HepG2 (cell line): ENCODE measurements at regions of chr9 and their contacts with region 1.

Region 1: DNA sequence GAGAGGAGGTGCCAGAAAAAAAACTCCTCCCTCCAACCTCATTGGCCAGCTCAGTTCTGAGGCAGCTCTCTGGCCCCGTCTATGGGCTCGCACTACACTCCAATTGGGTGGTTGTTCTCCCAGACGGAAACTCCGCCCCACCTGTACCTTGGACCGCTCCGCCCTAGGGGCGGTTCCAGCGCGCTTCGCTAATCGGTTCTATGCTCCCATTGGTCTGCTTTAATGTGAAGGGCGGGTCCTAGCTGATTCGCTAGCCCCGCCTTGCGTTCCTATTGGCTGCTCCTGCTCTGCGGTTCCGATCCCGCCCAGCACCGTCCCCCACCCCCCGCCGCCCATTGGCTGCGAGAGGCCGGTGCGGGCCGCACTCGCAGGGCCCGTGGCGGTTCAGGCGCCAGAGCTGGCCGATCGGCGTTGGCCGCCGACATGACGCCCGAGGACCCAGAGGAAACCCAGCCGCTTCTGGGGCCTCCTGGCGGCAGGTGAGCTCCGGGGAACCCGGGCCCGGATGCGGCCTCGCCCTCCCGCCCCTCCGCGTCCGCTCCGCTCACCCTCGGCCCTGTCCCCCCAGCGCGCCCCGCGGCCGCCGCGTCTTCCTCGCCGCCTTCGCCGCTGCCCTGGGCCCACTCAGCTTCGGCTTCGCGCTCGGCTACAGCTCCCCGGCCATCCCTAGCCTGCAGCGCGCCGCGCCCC is at the start of gene SLC2A8:
- DNase-seq: peak; percentile 99
- ATAC-seq: peak; percentile 83
- H3K4me3 ChIP-seq: peak within 1 kb of the TSS; percentile 86 to 96 (median 88)
- H3K27ac ChIP-seq: peak within 1 kb of the TSS; percentile 89
- H3K4me1 ChIP-seq: peaks cover 72% of the 10 kb centered on the region
- H3K27me3 ChIP-seq: no peaks in the 10 kb centered on the region
- CTCF ChIP-seq: peak; percentile 48
- EP300 ChIP-seq: no peak
- POLR2A ChIP-seq: peak in 1 of 2 experiments; percentile 89; a peak in 2 of 4 replicates
- RAD21 ChIP-seq: peak; percentile 85
- total RNA-seq, gene SLC2A8: 24.0 and 48.6 TPM in 2 replicates

Region 2: DNA sequence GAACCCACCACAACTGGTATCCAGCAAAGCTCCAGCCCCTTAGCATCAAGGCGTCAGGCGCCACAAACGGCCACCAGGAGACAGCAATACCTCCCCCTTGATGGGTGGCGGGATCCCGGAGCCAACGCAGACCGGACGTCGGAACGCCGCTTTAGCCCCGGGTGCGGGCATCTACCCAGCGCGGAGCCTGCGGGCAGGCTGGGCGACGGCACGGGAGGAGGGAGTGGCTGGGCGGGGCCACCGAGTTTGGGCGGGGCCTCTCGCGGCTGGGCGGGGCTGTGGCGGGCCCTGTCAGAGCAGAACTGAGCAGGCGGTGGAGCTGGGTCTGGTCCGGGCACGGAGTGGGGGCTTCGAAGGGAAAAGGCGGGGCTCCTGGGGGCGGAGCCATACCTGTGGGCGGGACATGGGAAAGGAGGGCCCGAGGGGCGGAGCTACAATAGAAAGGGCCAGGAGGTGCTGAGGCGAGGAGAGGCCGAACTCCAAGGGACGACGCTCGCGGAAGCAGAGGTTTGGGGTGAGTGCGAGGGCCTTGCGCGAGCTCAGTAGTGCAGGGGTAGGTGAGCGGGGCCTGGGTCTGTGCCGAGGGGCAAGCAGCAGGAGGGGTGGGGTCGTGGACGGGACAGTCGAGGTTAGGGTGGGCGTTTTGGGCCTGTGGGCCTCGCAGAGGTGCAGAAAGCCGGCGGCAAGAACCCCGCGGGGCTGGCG is 172.6 kb before region 1 on chr9:
- CTCF ChIA-PET with region 1: no interaction called
- POLR2A ChIA-PET with region 1: interaction called, 40 read pairs
- in situ Hi-C with region 1: no loop called
- intact Hi-C with region 1: no loop called
- DNase-seq: peak; percentile 85
- ATAC-seq: peak; percentile 87
- H3K4me3 ChIP-seq: peak overlapping the region; percentile 62 to 92 (median 70)
- H3K27ac ChIP-seq: peak overlapping the region; percentile 79
- H3K4me1 ChIP-seq: peaks cover 27% of the 10 kb centered on the region
- H3K27me3 ChIP-seq: peaks cover 0 to 4% of the 10 kb centered on the region in 2 experiments; a peak in 2 of 5 replicates
- CTCF ChIP-seq: peak; percentile 41; the same call in 1 of the 2 replicates
- EP300 ChIP-seq: no peak
- POLR2A ChIP-seq: peak; percentile 35 to 69; a peak in 3 of 4 replicates
- RAD21 ChIP-seq: no peak

Region 3: DNA sequence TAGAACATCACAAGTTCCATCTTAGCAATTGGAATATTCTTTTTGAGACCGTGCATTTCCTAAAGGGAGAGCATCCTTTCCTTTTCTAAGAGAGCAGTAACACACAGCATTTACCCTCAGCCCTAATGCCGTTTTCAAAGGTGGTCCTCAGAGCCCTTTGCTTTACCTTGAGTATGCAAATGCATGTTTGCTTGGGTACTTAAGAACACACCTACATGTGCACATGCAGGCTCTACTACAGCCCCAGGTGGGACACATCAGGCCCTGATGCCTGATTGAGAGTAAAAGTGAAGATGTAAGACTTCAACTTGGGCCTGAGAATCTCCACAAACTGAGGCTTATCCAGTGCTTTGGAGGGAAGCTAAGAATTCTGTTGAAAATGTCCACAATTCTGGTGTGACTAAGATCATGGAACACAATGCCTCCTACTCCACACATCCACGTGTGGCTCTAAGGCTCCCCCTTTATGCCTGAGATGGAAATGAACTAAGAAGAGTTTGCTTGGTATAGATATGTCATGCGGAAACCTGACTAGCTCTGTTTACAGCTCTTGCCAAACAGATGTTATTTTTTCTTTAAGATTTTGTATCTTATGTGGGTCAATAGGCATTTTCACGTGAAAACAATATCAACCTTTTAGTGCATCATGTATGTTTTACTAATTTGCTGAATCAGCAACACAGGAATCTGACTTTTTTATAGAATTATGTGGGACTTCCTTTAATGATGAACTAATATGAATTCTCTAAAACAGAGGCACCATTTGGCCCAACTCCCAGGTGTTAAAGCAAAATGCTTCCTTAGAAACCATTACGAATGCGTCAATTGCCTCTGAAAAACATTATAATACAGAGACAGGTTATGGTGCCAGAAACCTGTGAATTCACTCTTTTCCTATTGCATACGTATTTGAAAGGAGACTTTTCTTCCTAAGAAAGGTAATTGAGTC is 48.8 kb before region 1 on chr9:
- CTCF ChIA-PET with region 1: no interaction called
- POLR2A ChIA-PET with region 1: interaction called, 4 read pairs
- in situ Hi-C with region 1: no loop called
- intact Hi-C with region 1: loop called (anchors 10 kb)
- DNase-seq: peak; percentile 28
- ATAC-seq: peak; percentile 74
- H3K4me3 ChIP-seq: no peak overlapping the region
- H3K27ac ChIP-seq: no peak overlapping the region
- H3K4me1 ChIP-seq: no peaks in the 10 kb centered on the region
- H3K27me3 ChIP-seq: no peaks in the 10 kb centered on the region
- CTCF ChIP-seq: peak; percentile 54
- EP300 ChIP-seq: no peak
- POLR2A ChIP-seq: no peak
- RAD21 ChIP-seq: no peak

Region 4: GRCh38 chr9:127406799-127407509 is 10.0 kb after region 1 on chr9:
- CTCF ChIA-PET with region 1: no interaction called
- POLR2A ChIA-PET with region 1: interaction called, 31 read pairs
- in situ Hi-C with region 1: no loop called
- intact Hi-C with region 1: no loop called
- DNase-seq: no peak
- ATAC-seq: peak; percentile 53
- H3K4me3 ChIP-seq: no peak overlapping the region
- H3K27ac ChIP-seq: no peak overlapping the region
- H3K4me1 ChIP-seq: no peaks in the 10 kb centered on the region
- H3K27me3 ChIP-seq: no peaks in the 10 kb centered on the region
- CTCF ChIP-seq: no peak
- EP300 ChIP-seq: no peak
- POLR2A ChIP-seq: no peak; a peak in 1 of 4 replicates
- RAD21 ChIP-seq: 0 out of 2 replicates have a peak, but pooled peaks have one; percentile 19

Region 5: DNA sequence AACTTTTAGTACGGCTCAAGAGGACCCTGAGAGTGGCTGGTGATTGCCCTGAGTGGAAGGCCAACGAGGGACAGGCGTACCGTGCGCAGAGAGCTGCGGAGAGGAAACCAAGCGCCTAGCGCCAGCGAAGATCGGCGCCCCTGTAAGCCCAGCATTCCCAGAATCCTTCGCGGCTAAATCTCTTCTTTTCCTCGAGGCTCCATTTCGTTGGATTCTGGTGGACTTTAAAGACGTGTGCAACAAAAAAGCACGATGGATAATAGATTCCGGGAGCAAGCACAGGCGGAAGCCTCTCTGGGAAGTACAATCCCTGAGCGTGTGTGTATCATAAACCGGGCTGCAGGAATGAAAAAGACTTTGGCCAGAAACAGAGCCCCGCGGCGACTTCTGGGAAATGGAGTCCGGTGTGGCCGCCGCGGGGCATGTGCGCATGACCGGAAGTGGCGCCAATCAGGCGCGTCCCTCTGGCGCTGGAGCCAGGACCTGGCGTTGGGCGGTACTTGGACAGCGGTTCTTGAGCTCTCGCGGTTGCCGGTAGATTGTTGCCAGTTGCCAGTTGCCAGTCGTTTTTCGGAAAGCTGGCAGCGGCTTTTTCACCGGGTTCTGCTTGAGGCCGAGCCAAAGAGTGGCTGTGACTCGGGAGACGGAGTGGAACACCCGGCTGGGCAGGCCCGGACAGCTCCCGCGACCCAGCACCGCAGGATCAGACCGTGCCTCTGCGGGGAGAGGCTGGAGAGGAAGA is 27.2 kb after region 1 on chr9 and contains the start of gene ZNF79:
- CTCF ChIA-PET with region 1: no interaction called
- POLR2A ChIA-PET with region 1: interaction called, 28 read pairs
- in situ Hi-C with region 1: no loop called
- intact Hi-C with region 1: no loop called
- DNase-seq: peak; percentile 87
- ATAC-seq: peak; percentile 91
- H3K4me3 ChIP-seq: peak within 1 kb of the TSS; percentile 87 to 97 (median 93)
- H3K27ac ChIP-seq: peak within 1 kb of the TSS; percentile 95
- H3K4me1 ChIP-seq: peaks cover 47% of the 10 kb centered on the region
- H3K27me3 ChIP-seq: no peaks in the 10 kb centered on the region; a peak in 1 of 5 replicates
- CTCF ChIP-seq: 0 out of 2 replicates have a peak, but pooled peaks have one; percentile 8
- EP300 ChIP-seq: no peak
- POLR2A ChIP-seq: peak; percentile 62 to 85
- RAD21 ChIP-seq: peak; percentile 48; the same call in 1 of the 2 replicates
- total RNA-seq, gene ZNF79: 7.3 and 8.1 TPM in 2 replicates

Region 6: DNA sequence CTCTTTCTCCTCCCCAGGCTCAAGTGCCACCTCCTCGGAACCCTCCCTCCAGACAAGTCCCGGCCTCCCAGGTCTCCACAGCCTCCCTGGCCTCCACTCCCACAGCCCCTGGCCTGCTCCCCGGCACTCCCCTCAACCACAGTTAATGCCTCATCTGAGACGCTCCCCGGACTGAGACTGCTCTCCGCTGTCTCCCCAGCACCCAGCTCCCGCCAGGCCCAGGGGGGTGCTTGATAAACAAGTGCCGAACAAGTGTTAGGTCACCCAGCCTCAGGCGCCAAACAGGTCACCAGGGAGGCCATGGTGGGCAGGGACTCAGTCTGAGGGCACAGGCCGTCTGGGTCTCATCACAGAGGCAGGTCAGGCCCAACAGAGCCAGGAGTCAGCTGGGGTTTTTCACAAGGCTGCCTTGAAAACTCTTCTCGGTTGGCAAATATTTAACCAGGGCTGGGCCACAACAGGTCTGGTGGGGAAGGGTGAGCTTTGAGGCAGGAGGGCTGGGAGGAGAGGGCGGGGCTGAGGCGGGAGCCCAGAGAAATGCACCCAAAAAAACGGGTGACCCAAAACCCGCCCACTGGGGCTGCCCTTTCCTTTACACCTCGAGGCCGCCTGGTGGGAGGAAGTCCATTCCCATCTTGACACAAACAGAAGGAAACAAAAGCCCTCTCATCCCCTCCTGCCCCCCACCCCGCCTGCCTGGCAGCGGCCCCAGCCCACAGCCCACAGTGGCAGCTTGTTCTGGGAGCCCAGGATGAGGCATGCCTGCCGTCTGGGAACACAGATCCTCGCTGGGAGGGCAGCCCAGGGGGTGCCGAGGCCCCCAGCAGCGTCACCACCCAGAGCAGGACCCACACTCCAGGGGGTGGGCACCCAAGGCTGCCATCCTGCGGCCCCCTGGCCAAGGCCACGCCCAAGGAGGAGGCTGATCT is 148.5 kb after region 1 on chr9:
- CTCF ChIA-PET with region 1: no interaction called
- POLR2A ChIA-PET with region 1: no interaction called
- in situ Hi-C with region 1: no loop called
- intact Hi-C with region 1: no loop called
- DNase-seq: peak; percentile 96
- ATAC-seq: peak; percentile 92
- H3K4me3 ChIP-seq: peak overlapping the region; percentile 39 to 64 (median 46); a peak in 5 of 6 replicates
- H3K27ac ChIP-seq: peak overlapping the region; percentile 78
- H3K4me1 ChIP-seq: peaks cover 58% of the 10 kb centered on the region
- H3K27me3 ChIP-seq: no peaks in the 10 kb centered on the region
- CTCF ChIP-seq: no peak
- EP300 ChIP-seq: 0 out of 4 replicates have a peak, but pooled peaks of 1 of the 2 experiments have one; percentile 10
- POLR2A ChIP-seq: peak; percentile 51 to 59; a peak in 2 of 4 replicates
- RAD21 ChIP-seq: no peak; the same call in 1 of the 2 replicates

Region 7: DNA sequence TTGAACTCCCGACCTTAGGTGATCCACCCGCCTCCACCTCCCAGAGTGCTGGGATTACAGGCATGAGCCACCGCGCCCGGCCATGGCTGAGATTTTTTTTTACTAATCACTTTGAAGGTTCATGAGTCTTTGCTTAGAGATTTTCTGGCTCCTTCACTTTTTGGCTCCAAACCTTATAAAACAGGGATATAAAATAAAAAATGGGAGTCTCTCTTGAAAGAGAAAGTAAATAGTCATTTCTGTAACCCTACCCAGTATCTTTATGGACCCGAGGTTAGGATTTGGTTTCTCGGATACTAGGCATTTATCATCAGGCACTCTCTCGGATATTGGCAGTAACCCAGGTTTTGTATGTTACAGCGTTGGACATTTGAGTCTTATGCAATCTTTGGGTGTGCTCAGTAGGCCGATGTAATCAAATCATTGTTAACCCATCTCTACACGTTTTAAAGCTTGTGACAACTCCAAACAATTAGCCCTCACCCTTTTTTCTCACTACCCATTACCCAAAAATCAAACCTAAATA is 240.4 kb after region 1 on chr9:
- CTCF ChIA-PET with region 1: no interaction called
- POLR2A ChIA-PET with region 1: no interaction called
- in situ Hi-C with region 1: no loop called
- intact Hi-C with region 1: no loop called
- DNase-seq: peak; percentile 38
- ATAC-seq: no peak
- H3K4me3 ChIP-seq: no peak overlapping the region
- H3K27ac ChIP-seq: no peak overlapping the region
- H3K4me1 ChIP-seq: peaks cover 38% of the 10 kb centered on the region
- H3K27me3 ChIP-seq: no peaks in the 10 kb centered on the region
- CTCF ChIP-seq: no peak
- EP300 ChIP-seq: no peak
- POLR2A ChIP-seq: no peak
- RAD21 ChIP-seq: no peak

Region 8: DNA sequence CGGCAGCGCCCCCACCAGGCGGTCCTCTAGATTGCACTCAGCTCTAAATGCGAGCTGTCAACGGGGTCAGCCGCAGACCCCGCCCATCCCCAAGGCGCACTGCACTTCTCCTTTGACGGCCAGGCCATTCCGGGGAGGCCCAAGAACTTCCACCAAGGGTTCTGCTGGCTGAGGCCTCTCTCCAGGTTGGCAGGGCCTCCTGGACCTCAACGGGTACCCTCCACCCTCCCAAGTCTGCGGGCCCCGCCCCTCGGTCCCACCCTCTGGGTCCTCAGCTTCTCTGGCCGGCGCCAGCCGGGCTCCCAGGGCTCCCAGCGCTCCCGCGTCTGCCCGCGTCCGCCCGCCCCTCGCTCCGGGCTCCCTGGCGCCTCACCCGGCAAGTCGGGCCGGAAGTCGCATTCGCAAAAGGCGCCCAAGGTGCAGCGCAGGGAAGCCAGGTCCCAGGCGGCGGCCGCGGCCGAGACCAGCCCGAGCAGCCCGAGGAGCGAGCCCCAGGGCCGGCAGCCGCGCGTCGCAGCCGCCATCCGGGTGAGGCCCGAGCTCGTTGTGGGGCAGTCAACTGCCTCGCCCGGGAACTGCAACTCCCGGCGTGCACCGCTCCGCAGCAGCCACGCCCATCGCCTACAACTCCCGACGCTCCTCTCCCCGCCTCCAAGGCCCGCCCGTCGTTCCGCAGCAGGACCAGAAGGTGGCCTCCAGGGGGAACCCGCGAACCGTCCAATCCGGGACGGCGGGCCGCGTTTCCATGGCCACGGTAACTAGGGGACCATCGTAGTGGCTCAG is 338.0 kb after region 1 on chr9 and contains the start of gene TOR2A:
- CTCF ChIA-PET with region 1: no interaction called
- POLR2A ChIA-PET with region 1: no interaction called
- in situ Hi-C with region 1: no loop called
- intact Hi-C with region 1: no loop called
- DNase-seq: peak; percentile 93
- ATAC-seq: peak; percentile 91
- H3K4me3 ChIP-seq: peak within 1 kb of the TSS; percentile 57 to 77 (median 74)
- H3K27ac ChIP-seq: peak within 1 kb of the TSS; percentile 71
- H3K4me1 ChIP-seq: peaks cover 29% of the 10 kb centered on the region
- H3K27me3 ChIP-seq: peaks cover 4 to 19% of the 10 kb centered on the region in 2 experiments; a peak in 4 of 5 replicates
- CTCF ChIP-seq: peak; percentile 99
- EP300 ChIP-seq: peak; percentile 13 to 29; a peak in 1 of 4 replicates
- POLR2A ChIP-seq: peak; percentile 51 to 70
- RAD21 ChIP-seq: peak; percentile 90
- total RNA-seq, gene TOR2A: 5.5 and 7.2 TPM in 2 replicates